ENCODE measurements at regions of chr7 and their contacts with region 1.

Region 1: DNA sequence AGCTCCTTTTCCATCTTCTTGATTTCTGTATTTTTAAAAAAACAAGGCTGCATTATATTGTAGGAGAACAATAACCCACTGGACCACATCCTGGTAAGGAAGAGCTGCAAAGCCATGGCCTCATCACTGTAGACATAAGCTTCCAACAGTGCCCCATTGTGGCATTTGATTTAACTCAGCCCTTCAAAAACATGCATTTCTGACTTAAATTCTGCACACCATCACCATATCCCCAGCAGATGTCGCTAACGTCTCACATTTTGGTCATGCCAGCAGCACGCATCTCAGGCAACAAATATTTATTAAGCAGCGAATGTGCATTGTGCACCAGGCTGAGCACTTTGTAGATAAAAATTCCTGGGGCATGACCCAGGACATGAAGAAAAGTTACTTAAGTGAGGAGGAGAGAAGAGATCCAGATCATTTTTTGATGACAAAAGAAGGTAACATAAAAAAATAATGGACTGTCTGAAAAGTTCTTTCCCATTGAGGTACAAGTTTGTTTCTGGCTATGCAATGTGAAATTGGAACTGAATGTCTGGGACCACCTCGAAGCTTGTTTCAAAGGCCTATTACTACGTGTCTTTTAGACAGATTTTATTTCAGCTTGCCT is 164.6 kb upstream of the CDCA7L start:
- DNase-seq: peak; percentile 93
- H3K4me3 ChIP-seq: no peak overlapping the region
- H3K27ac ChIP-seq: peak overlapping the region; percentile 24
- H3K4me1 ChIP-seq: peaks cover 15% of the 10 kb centered on the region
- H3K27me3 ChIP-seq: no peaks in the 10 kb centered on the region
- CTCF ChIP-seq: peak; percentile 65 to 77
- POLR2A ChIP-seq: no peak

Region 2: GRCh38 chr7:22140578-22140977 is 30.2 kb after region 1 on chr7:
- CTCF ChIA-PET with region 1: interaction called, 25 read pairs
- POLR2A ChIA-PET with region 1: no interaction called
- dilution Hi-C with region 1: no loop called
- intact Hi-C with region 1: no loop called
- DNase-seq: no peak
- H3K4me3 ChIP-seq: no peak overlapping the region
- H3K27ac ChIP-seq: no peak overlapping the region
- H3K4me1 ChIP-seq: no peaks in the 10 kb centered on the region
- H3K27me3 ChIP-seq: no peaks in the 10 kb centered on the region
- CTCF ChIP-seq: no peak
- POLR2A ChIP-seq: no peak

Region 3: DNA sequence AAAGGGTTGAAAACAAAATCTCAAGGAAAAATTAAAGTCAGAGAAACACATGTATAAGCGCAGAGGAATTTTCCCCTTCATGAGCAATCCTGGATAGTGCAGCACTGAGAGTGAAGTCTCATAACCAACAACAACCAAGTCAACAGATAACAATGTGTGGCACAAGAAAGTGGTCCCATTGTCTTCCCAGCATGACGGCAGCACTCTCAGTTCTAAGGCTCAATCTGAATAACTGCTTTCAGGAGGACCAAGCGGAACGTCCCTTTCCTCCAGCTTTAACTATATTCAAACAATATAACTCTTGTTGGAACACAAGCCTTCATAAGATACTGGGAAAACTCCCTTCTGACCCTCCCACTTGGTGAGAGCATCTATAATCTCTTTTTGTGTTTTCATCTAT is 108.7 kb after region 1 on chr7:
- CTCF ChIA-PET with region 1: interaction called, 11 read pairs
- POLR2A ChIA-PET with region 1: no interaction called
- dilution Hi-C with region 1: no loop called
- intact Hi-C with region 1: loop called (anchors 1 kb)
- DNase-seq: peak; percentile 87
- H3K4me3 ChIP-seq: peak overlapping the region; percentile 41 to 85 (median 73)
- H3K27ac ChIP-seq: peak overlapping the region; percentile 98
- H3K4me1 ChIP-seq: peaks cover 60% of the 10 kb centered on the region
- H3K27me3 ChIP-seq: no peaks in the 10 kb centered on the region
- CTCF ChIP-seq: no peak
- POLR2A ChIP-seq: peak; percentile 63

Region 4: DNA sequence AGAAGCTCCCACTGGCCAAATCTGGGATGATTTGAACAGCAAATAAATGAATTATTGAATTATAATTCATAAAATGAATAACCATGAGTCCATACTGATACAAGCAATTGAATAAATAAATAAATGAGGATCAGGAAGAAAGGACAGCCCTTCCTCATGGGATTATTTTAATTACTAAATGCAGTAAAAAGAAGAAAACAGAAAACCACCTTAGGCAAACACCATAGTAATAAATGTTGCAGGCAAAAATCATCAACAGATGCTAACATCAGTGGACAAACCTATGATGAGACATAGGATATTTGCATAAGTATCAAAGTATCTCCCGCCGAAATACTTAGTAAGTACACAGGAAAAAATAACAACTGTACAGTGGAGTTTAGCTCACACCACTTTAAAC is 213.4 kb after region 1 on chr7:
- CTCF ChIA-PET with region 1: interaction called, 10 read pairs
- POLR2A ChIA-PET with region 1: no interaction called
- dilution Hi-C with region 1: no loop called
- intact Hi-C with region 1: no loop called
- DNase-seq: no peak
- H3K4me3 ChIP-seq: no peak overlapping the region
- H3K27ac ChIP-seq: no peak overlapping the region
- H3K4me1 ChIP-seq: no peaks in the 10 kb centered on the region
- H3K27me3 ChIP-seq: no peaks in the 10 kb centered on the region
- CTCF ChIP-seq: no peak
- POLR2A ChIP-seq: no peak

Region 5: GRCh38 chr7:22452142-22452959 is 342.0 kb after region 1 on chr7:
- CTCF ChIA-PET with region 1: interaction called, 22 read pairs
- POLR2A ChIA-PET with region 1: no interaction called
- dilution Hi-C with region 1: loop called (anchors 25 kb)
- intact Hi-C with region 1: no loop called
- DNase-seq: peak; percentile 51
- H3K4me3 ChIP-seq: no peak overlapping the region
- H3K27ac ChIP-seq: no peak overlapping the region
- H3K4me1 ChIP-seq: no peaks in the 10 kb centered on the region
- H3K27me3 ChIP-seq: no peaks in the 10 kb centered on the region
- CTCF ChIP-seq: peak; percentile 70 to 74
- POLR2A ChIP-seq: no peak

Region 6: DNA sequence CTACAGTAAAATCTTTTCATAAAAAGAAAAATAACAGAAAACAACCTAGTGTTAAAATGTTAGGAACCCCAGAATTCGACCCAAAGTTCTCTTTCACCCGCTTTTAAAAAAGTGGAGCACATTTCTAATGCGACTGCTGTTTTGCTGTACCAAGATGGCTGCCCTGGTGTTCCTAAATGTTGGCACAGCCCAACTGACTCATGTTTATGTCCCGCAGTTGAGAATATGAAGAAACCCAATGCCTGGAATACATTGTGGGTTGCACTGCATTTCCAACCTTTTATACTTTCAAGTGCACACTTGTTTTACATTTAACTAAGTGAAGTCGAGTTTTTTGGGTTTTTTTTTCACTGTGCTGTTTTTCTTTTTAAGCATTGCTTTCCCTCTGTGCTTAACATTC is 388.7 kb after region 1 on chr7:
- CTCF ChIA-PET with region 1: interaction called, 46 read pairs
- POLR2A ChIA-PET with region 1: no interaction called
- dilution Hi-C with region 1: no loop called
- intact Hi-C with region 1: loop called (anchors 1 kb)
- DNase-seq: no peak
- H3K4me3 ChIP-seq: peak overlapping the region in 2 of 3 experiments; percentile 40 to 43
- H3K27ac ChIP-seq: peak overlapping the region; percentile 90
- H3K4me1 ChIP-seq: peaks cover 39% of the 10 kb centered on the region
- H3K27me3 ChIP-seq: no peaks in the 10 kb centered on the region
- CTCF ChIP-seq: no peak
- POLR2A ChIP-seq: peak; percentile 43

Measured in endothelial cell of umbilical vein (primary cell).